ENCODE measurements at regions of chr9 and their contacts with region 1.

Region 1: DNA sequence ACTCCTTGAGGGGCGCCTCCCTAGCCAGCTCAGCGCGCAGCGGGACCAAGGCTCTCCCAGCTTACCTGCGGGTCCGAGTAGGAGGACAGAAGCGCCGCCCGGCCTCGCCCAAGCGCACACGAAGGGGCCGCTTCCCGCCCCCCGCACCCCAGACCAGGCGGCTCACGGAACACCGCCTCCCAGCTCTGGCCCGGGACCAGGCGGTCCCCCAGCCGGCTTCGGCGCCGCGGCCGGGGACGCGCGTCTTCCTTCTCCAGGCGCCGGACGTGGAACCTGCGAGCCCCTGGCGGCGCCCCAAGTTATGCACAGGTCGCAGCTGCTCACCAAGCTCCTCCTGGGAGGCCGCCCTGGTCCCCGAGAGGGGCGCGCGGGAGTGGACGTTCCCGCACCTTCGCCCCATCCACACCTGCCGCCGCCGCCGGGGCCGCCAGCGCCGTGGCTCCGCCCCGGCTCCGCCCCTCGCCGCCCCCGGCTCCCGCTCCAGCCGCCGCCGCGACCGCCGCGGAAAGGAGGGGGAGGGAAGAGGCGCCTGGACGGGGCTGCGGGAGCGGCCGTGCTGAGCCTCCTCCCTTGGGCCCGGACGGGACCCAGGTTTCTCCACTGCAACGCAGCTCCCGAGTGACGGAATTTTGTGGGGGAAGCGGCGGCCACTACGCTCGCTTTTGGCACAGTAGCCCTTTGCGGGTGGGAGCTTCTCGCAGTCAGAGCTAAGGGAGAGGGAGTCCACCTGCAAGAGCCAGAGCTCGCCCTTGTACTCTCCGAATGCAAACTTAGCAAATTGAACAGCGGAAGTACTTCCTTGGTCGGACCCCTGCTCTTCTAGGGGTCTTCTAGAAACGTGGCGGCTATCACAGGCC is 77.5 kb upstream of the IFNE start:
- DNase-seq: peak; percentile 67
- ATAC-seq: peak; percentile 85
- H3K4me3 Mint-ChIP-seq: peak overlapping the region; percentile 87
- H3K27ac Mint-ChIP-seq: peak overlapping the region; percentile 30
- H3K4me1 Mint-ChIP-seq: peaks cover 42% of the 10 kb centered on the region
- H3K27me3 Mint-ChIP-seq: peaks cover 16% of the 10 kb centered on the region
- CTCF ChIP-seq: no peak

Region 2: GRCh38 chr9:21381448-21382339 is 178.0 kb before region 1 on chr9:
- CTCF ChIA-PET with region 1: no interaction called
- POLR2A ChIA-PET with region 1: no interaction called
- intact Hi-C with region 1: no loop called
- DNase-seq: peak; percentile 34
- ATAC-seq: peak; percentile 91
- H3K4me3 Mint-ChIP-seq: peak overlapping the region; percentile 24
- H3K27ac Mint-ChIP-seq: no peak overlapping the region
- H3K4me1 Mint-ChIP-seq: peaks cover 20% of the 10 kb centered on the region
- H3K27me3 Mint-ChIP-seq: peaks cover 31% of the 10 kb centered on the region
- CTCF ChIP-seq: no peak

Region 3: GRCh38 chr9:21465859-21466518 is 93.7 kb before region 1 on chr9:
- CTCF ChIA-PET with region 1: interaction called, 14 read pairs
- POLR2A ChIA-PET with region 1: no interaction called
- intact Hi-C with region 1: no loop called
- DNase-seq: no peak
- ATAC-seq: peak; percentile 77
- H3K4me3 Mint-ChIP-seq: no peak overlapping the region
- H3K27ac Mint-ChIP-seq: no peak overlapping the region
- H3K4me1 Mint-ChIP-seq: no peaks in the 10 kb centered on the region
- H3K27me3 Mint-ChIP-seq: no peaks in the 10 kb centered on the region
- CTCF ChIP-seq: peak; percentile 73

Region 4: DNA sequence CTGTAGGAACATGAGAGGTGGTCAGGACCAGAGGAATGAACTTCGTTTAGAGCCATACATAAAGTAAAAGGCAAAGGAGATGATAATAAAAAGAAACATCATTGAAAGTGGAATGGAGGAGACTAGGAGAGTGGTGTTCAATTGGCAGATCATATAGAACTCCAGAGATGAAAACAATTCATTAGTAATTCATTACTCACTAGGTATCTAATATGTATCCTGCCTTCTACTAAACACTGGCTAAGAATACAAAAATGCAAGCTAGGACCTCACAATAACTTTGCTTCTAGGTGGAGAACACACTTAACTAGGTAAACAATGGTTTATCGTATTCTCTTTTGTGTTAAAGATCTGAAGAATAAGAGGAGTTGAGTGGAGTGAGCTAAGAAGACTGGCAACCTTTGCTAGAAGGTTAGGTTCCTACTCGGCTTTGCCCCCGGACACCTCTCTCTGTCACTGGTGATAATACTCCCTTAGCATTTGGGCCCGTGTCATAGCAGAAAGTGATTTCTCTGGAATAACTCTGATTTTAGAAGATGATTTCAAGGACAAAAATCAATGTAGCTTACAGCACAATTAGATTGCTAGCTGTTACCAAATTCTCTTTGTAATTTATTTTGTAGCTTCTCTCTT is 11.1 kb after region 1 on chr9:
- CTCF ChIA-PET with region 1: interaction called, 18 read pairs
- POLR2A ChIA-PET with region 1: interaction called, 3 read pairs
- intact Hi-C with region 1: no loop called
- DNase-seq: no peak
- ATAC-seq: no peak
- H3K4me3 Mint-ChIP-seq: no peak overlapping the region
- H3K27ac Mint-ChIP-seq: no peak overlapping the region
- H3K4me1 Mint-ChIP-seq: no peaks in the 10 kb centered on the region
- H3K27me3 Mint-ChIP-seq: peaks cover 4% of the 10 kb centered on the region
- CTCF ChIP-seq: no peak

Region 5: DNA sequence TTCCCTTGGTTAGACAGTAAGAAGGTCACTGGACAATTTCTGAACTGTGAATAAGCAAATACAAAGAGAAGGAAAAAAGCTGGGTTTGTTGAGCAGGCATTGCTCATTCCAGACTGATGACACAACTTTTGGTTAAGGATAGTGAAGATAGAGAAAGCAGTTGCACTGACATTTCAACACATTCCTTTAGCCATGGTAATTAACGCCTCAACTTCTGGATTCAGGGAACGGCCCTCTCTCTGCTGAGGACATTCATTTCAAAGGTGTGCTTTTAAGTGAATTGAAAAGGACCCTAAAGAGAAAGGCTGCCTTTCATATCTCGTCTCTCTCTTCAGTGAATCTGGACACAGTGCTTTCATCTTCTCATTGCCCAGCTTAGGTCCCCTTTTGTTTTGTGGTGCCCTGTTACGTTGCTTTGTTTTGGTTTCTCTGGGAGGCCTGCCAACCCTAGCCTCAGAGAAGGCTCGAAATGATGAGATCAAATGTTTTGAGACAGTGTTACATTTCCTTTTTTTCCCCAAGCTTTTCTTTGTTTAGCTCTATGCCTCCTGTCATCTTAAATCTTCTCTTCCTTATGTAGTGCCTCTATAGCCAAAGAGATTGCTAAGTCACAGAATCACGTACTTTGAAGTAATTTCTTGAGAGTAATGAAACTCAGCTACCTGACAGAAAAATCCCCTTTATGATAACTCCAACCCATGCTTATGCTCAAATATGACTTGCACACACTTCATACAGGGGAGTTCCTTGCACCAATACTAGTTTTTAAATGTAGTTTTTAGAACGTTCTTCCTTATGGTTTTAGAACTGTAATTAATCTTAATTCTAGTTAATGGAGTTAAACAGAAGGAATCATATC is 16.9 kb after region 1 on chr9:
- CTCF ChIA-PET with region 1: interaction called, 18 read pairs
- POLR2A ChIA-PET with region 1: interaction called, 4 read pairs
- intact Hi-C with region 1: no loop called
- DNase-seq: peak; percentile 74
- ATAC-seq: peak; percentile 80
- H3K4me3 Mint-ChIP-seq: peak overlapping the region; percentile 34
- H3K27ac Mint-ChIP-seq: peak overlapping the region; percentile 66
- H3K4me1 Mint-ChIP-seq: peaks cover 34% of the 10 kb centered on the region
- H3K27me3 Mint-ChIP-seq: peaks cover 2% of the 10 kb centered on the region
- CTCF ChIP-seq: no peak